PC-3 (cell line): ENCODE measurements at regions of chr5 and their contacts with region 1.

Region 1: DNA sequence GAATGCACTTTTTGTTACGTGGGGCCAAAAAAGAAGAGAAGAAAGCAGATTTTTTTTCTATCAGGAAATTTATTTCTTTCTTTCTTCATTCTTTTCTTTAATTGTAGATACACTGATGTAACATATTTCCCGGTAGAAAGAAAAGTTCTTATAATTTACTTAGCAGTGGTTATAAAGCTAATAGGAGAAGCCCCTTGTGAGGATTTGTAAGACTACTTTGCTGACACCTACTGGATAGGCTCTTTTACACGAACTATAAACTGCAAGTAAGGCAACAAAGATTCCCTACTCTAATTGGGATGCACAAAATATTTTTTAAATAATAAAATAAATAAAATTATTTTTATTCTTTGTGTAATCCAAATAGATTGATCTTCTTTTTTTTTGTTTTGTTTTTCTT is 284.4 kb downstream of the DNAH5 start:
- DNase-seq: peak; percentile 53
- ATAC-seq: no peak
- H3K4me3 ChIP-seq: no peak overlapping the region
- H3K27ac ChIP-seq: no peak overlapping the region
- H3K4me1 ChIP-seq: peaks cover 19% of the 10 kb centered on the region
- H3K27me3 ChIP-seq: no peaks in the 10 kb centered on the region
- CTCF ChIP-seq: peak; percentile 57

Region 2: GRCh38 chr5:13731121-13731628 is 71.1 kb after region 1 on chr5:
- CTCF ChIA-PET with region 1: no interaction called
- POLR2A ChIA-PET with region 1: no interaction called
- intact Hi-C with region 1: loop called (anchors 5 kb)
- DNase-seq: peak; percentile 97
- ATAC-seq: peak; percentile 98
- H3K4me3 ChIP-seq: no peak overlapping the region
- H3K27ac ChIP-seq: peak overlapping the region; percentile 92
- H3K4me1 ChIP-seq: peaks cover 19% of the 10 kb centered on the region
- H3K27me3 ChIP-seq: no peaks in the 10 kb centered on the region
- CTCF ChIP-seq: no peak

Region 3: GRCh38 chr5:13745508-13745907 is 85.4 kb after region 1 on chr5:
- CTCF ChIA-PET with region 1: no interaction called
- POLR2A ChIA-PET with region 1: no interaction called
- intact Hi-C with region 1: loop called (anchors 5 kb)
- DNase-seq: peak; percentile 95
- ATAC-seq: peak; percentile 91
- H3K4me3 ChIP-seq: no peak overlapping the region
- H3K27ac ChIP-seq: peak overlapping the region; percentile 90
- H3K4me1 ChIP-seq: peaks cover 44% of the 10 kb centered on the region
- H3K27me3 ChIP-seq: no peaks in the 10 kb centered on the region
- CTCF ChIP-seq: no peak